Aorta (tissue), 5 donors: ENCODE measurements at regions of chr4 and their contacts with region 1.

Region 1: DNA sequence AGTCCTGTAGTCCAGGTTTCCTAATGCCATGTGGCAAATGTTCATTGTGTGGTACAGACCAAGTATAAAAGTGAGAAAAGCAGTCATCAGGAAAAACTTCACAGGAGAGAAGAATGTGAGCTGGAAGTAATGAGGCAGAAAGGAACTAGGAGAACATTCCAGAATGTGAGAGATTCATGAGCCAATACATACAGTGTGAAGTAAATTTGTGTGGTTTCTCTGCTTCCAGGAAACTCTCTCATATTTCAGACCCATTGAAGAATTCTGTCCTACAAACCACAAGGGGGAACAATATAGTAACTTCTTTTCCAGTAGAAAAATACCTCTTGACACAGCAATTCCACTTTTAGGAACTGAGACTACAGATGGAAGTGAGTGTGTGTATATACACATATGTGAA is 136.5 kb downstream of the RNF150 start:
- DNase-seq: no peak
- ATAC-seq: no peak
- H3K4me3 ChIP-seq: no peak overlapping the region
- H3K27ac ChIP-seq: no peak overlapping the region
- H3K4me1 ChIP-seq: peaks cover 0 to 12% of the 10 kb centered on the region in 2 donors
- H3K27me3 ChIP-seq: no peaks in the 10 kb centered on the region

Region 2: DNA sequence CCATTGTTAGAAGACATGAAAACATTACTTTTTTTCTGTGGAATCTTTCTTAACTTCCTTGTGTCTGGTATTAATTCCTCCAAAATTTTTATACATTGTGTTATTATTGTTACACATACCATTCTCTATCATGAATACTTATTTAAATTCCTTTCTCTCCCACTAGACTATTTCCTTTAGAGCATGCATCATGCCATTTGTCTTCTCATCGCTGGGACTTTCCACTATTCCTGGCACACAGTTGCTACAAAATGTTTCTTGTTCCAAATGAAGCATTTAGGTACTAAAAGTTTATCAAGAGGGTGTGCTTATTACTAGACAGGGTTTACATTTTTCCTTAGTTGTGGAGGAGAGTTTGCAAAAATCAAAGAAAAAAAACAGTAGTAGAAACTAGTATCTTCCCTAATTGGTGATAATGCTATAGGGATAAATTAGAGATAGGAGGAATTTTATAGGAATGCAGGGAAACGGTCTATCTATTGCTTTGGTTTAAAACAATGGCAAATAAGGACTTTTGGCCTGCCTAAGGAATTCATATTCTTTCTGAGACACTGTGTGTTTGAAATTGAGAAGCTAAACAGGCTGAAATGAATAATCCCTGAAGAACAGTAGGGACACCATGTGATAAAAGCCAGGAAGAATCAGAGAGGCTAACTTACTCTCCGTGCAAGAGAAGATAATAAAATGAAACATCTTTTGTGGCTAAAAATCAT is 53.1 kb before region 1 on chr4:
- intact Hi-C with region 1: loop called in 1 of 2 experiments (anchors 5 kb)
- DNase-seq: no peak
- ATAC-seq: no peak
- H3K4me3 ChIP-seq: no peak overlapping the region
- H3K27ac ChIP-seq: no peak overlapping the region
- H3K4me1 ChIP-seq: no peaks in the 10 kb centered on the region
- H3K27me3 ChIP-seq: no peaks in the 10 kb centered on the region